Breast epithelium (tissue), 4 donors: ENCODE measurements at regions of chr13 and their contacts with region 1.

Region 1: DNA sequence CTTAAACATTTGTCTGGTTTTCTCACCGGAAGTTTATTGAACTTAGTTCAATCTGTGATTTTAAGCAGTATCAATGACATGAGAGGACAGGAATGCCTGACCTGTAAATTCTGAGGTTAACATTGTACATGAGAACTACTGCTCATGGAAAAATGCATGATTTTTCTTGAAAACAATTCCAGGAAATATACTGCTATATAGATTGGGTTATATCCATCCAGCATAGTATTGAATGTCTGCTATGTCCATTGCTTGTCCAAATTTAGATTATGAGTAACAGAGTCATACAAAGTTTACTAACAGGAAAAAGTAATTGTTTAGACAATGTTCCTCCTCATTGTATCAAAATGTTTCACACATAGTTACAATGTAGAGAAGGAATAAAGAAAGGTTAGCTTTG is 606.8 kb downstream of the DACH1 start:
- DNase-seq: no peak
- H3K4me3 ChIP-seq: no peak overlapping the region
- H3K27ac ChIP-seq: no peak overlapping the region
- H3K4me1 ChIP-seq: no peaks in the 10 kb centered on the region
- H3K27me3 ChIP-seq: no peaks in the 10 kb centered on the region
- CTCF ChIP-seq: no peak
- POLR2A ChIP-seq: no peak

Region 2: DNA sequence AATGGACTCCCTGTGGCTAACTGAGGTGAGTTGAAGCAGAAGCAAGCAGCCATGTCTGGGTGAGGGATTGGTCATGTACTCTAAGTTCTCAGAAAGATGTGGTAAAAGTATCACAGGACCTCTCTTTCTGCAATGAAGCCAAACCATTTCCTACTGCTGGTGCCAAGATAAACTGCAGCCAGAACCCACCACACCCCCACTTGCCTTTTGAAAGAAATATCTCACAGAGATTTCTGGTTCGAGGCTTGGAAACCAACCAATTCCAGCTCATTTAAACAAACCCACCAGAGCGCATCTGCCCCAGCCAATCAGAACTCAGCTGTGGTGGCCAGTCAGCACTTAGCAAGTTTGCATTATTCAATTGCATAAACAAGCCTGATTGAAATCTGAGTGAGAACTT is 1357.2 kb before region 1 on chr13:
- intact Hi-C with region 1: no loop called
- DNase-seq: no peak
- H3K4me3 ChIP-seq: no peak overlapping the region
- H3K27ac ChIP-seq: no peak overlapping the region
- H3K4me1 ChIP-seq: no peaks in the 10 kb centered on the region
- H3K27me3 ChIP-seq: no peaks in the 10 kb centered on the region
- CTCF ChIP-seq: no peak
- POLR2A ChIP-seq: no peak

Region 3: DNA sequence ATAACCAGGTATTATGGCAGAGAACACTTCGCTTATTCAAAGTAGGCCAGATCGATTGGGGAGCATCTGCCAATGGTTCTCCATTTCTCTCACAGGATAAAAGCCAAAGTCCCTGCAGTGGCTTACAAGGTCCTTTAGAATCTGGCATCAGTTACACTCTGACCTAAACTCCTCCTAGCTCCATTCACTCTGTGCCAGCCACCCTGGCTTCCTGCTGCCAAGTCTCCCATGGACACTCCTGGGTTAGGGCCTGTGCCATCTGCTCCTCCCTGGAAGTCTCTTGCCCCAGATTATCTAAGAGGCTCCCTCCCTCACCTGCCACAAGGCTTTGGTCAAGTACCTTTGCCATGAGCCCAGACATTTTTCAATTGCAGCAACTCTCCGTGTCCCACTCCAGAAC is 42.4 kb before region 1 on chr13:
- intact Hi-C with region 1: loop called (anchors 2 kb)
- DNase-seq: no peak
- H3K4me3 ChIP-seq: no peak overlapping the region
- H3K27ac ChIP-seq: no peak overlapping the region
- H3K4me1 ChIP-seq: no peaks in the 10 kb centered on the region
- H3K27me3 ChIP-seq: no peaks in the 10 kb centered on the region
- CTCF ChIP-seq: no peak
- POLR2A ChIP-seq: no peak